ENCODE measurements at regions of chr17 and their contacts with region 1.

Region 1: DNA sequence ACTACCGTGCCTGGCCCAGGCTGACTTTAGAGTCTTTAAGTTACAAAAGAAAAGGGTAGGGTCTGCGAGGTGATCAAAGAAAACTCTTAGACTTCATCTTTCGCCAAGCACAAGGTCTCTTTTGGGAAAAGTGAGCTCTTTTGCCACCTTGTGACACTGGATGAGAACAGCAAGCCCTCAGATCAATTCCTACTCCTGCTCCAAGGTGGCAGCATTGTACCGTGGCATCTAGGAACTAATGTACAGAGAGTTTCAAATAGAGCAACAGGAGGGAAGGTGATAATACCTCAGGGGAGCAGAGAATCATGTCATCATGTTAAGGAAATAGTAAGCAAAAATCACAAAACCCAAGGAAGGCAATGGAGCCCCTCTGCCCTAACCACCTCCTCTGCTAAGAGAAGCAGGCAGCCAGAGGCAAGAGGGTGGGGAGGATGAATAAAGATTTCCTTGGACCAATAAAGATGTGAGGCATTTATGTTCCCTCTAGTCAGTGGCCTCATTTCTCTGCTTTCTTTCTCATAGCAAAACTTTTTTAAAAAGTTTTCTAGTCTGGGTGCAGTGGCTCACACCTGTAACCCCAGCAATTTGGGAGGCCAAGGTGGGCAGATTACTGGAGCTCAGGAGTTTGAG is 2.1 kb upstream of the C17orf78 start:
- DNase-seq: peak; percentile 82
- H3K4me3 Mint-ChIP-seq: no peak overlapping the region
- H3K27ac Mint-ChIP-seq: no peak overlapping the region
- H3K4me1 Mint-ChIP-seq: peaks cover 7% of the 10 kb centered on the region
- H3K27me3 Mint-ChIP-seq: peaks cover 3% of the 10 kb centered on the region

Region 2: DNA sequence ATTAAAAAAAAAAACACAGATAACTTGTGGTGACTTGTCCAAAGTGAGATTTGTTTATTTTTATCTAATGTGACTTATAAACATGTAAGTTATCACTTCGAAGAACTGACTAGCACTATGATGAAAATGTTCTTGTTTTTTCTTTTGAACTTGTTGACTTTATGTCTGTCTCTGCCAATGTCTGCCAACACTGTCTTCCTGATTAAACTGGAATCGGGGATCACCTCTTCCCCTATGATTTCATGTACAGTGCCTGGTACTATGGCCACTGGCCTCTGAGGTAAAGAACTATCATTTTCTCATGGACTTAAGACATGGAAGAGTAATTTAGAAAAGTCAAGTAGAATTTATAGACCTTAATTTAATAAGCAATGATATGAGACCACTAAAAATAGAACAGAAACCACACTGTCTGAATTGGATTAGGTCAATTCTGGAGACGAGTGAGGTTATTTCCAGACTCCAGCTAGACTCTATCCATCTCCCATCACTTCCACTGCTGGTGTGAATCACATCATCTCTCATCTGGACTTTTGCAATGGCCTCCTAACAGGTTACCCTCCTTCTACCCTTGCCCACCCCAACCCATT is 11.0 kb after region 1 on chr17:
- CTCF ChIA-PET with region 1: interaction called, 15 read pairs
- POLR2A ChIA-PET with region 1: no interaction called
- DNase-seq: no peak
- H3K4me3 Mint-ChIP-seq: no peak overlapping the region
- H3K27ac Mint-ChIP-seq: no peak overlapping the region
- H3K4me1 Mint-ChIP-seq: no peaks in the 10 kb centered on the region
- H3K27me3 Mint-ChIP-seq: no peaks in the 10 kb centered on the region

Region 3: DNA sequence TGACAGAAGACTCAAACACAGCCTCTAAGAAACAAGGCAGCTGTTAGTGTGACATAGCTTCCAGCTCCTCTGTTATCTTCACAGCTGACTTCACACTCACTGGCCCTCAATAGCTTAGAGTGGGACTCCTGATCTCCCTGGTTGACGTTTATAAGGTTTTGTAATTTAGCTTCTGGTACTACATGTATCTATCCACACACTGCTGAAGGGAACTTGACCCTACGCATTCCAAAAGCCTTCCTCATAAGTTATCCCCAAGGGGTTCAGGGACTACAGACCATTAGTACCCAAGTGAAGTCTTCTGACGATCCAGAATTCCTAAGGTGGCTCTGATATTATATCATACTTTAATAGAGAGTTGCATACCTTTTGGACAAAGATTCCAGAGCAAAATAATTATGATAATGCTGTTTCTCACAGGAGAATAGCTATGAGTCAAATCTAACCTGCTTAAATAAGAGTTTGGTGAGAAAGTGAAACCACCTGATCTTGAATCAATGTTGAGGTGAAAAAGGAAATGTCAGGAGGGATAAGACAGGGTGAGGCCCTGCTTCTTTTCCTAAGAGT is 18.5 kb after region 1 on chr17:
- CTCF ChIA-PET with region 1: interaction called, 31 read pairs
- POLR2A ChIA-PET with region 1: interaction called, 3 read pairs
- DNase-seq: no peak
- H3K4me3 Mint-ChIP-seq: no peak overlapping the region
- H3K27ac Mint-ChIP-seq: peak overlapping the region; percentile 5
- H3K4me1 Mint-ChIP-seq: peaks cover 18% of the 10 kb centered on the region
- H3K27me3 Mint-ChIP-seq: no peaks in the 10 kb centered on the region

Measured in activated CD4-positive, alpha-beta memory T cell treated with anti-CD3 and anti-CD28 coated beads, Interleukin-2, amount 10 ng/mL, durations not matched to agents 7 days and 5 days (primary cell).